Activated naive CD4-positive, alpha-beta T cell treated with anti-CD3 and anti-CD28 coated beads, Interleukin-2, amount 10 ng/mL, durations not matched to agents 7 days and 5 days (primary cell): ENCODE measurements at regions of chr1 and their contacts with region 1.

Region 1: GRCh38 chr1:92831762-92832536 is at the start of gene RPL5:
- DNase-seq: peak; percentile 98
- H3K4me3 Mint-ChIP-seq: peak within 1 kb of the TSS; percentile 84
- H3K27ac Mint-ChIP-seq: peak within 1 kb of the TSS; percentile 92
- H3K4me1 Mint-ChIP-seq: peaks cover 45% of the 10 kb centered on the region
- H3K27me3 Mint-ChIP-seq: peaks cover 5% of the 10 kb centered on the region

Region 2: GRCh38 chr1:92916902-92917301 is 85.0 kb after region 1 on chr1:
- CTCF ChIA-PET with region 1: no interaction called
- DNase-seq: no peak
- H3K4me3 Mint-ChIP-seq: no peak overlapping the region
- H3K27ac Mint-ChIP-seq: no peak overlapping the region
- H3K4me1 Mint-ChIP-seq: peaks cover 2% of the 10 kb centered on the region
- H3K27me3 Mint-ChIP-seq: no peaks in the 10 kb centered on the region

Region 3: DNA sequence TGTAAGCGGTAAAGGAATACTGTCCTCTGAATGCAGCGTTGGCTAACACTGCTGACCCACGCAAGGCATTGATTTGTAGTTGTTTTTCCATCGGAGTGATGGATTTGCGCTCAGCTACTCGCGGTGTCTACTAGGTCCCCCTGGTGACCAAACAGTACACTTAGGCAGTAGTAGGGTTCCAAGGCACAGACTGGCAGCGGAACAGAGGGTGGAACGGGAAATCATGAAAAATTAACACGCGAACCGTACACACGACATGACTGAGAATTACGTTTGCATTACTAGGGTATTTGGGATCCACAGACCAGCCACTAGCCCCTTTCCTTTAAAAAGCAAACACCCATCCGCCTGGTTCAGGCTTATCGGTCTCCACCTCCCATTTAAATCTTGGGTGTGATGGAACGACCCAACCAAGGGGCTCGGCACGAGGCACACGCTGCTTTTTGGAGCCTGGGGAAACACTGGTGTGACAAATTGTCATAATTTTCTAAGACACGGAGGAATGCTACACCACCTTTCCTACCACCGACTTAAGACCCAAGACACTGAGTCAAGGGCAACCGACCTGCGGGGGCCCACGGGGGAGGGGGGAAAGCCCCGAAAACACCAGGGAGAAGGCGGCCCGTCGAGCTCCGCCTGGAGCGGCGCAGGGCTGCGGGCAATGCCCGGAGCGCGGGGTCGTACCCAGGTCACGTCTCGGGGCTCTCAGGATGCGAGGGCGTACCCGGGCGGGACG is 128.6 kb after region 1 on chr1:
- CTCF ChIA-PET with region 1: interaction called, 10 read pairs
- DNase-seq: peak; percentile 77
- H3K4me3 Mint-ChIP-seq: peak overlapping the region; percentile 88
- H3K27ac Mint-ChIP-seq: peak overlapping the region; percentile 98
- H3K4me1 Mint-ChIP-seq: peaks cover 40% of the 10 kb centered on the region
- H3K27me3 Mint-ChIP-seq: no peaks in the 10 kb centered on the region